Activated CD4-positive, alpha-beta memory T cell treated with anti-CD3 and anti-CD28 coated beads, Interleukin-2, amount 10 ng/mL, durations not matched to agents 7 days and 5 days (primary cell): ENCODE measurements at regions of chr7 and their contacts with region 1.

Region 1: GRCh38 chr7:142811154-142811737 is 40.5 kb downstream of the PRSS2 start:
- DNase-seq: no peak
- H3K4me3 Mint-ChIP-seq: no peak overlapping the region
- H3K27ac Mint-ChIP-seq: peak overlapping the region; percentile 79
- H3K4me1 Mint-ChIP-seq: peaks cover 71% of the 10 kb centered on the region
- H3K27me3 Mint-ChIP-seq: peaks cover 3% of the 10 kb centered on the region

Region 2: DNA sequence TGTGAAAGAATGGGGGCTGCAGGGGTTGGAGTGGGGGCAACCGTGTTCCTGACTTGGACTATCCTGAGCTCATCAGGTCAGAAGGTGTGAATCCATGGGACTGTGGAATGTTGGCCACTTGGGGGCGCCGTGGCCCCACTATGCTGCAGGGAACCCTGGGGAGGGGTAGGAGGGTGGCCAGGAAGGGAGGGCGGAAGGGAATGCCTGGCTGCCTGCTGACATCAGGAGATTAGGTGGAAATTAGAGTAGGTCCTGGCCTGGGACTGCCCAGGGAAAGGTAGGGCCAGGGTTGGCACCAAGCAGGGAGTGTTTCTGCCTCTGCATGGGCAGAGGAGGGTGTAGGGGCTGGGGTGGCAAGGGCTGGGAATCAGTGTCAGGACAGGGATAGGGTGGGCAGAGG is 487.5 kb before region 1 on chr7:
- CTCF ChIA-PET with region 1: interaction called, 37 read pairs
- POLR2A ChIA-PET with region 1: interaction called, 13 read pairs
- DNase-seq: peak; percentile 48
- H3K4me3 Mint-ChIP-seq: no peak overlapping the region
- H3K27ac Mint-ChIP-seq: no peak overlapping the region
- H3K4me1 Mint-ChIP-seq: peaks cover 19% of the 10 kb centered on the region
- H3K27me3 Mint-ChIP-seq: peaks cover 10% of the 10 kb centered on the region

Region 3: DNA sequence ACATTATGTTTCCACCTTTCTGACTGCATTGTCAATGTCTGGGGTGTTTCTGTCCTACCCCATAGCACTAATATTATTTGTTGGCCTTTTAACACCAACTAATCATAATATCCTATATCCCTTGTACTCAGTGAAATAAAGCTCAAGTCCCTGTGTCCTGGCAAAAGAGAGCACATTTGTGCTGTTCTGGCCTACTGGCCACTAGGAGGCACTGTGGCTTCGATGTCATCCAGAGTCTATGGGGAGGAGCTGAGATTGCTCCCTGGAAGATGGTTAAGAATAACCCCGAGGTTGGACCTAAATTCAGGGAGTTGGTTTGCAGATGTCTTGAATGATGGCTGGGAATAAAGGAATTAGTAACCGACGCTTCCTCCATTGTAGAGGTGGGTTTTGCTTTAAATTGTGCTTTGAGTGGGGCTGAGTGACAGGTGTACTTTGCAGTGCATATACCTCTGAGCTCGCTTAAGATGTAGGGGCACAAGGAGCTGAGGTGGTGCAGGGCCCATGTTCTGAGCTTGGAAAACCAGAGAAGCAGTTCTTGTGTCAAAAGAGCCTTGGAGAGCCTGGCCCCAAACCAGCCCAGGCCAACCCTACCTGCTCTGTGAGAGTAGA is 253.2 kb before region 1 on chr7:
- CTCF ChIA-PET with region 1: interaction called, 20 read pairs
- POLR2A ChIA-PET with region 1: interaction called, 5 read pairs
- DNase-seq: peak; percentile 58
- H3K4me3 Mint-ChIP-seq: peak overlapping the region; percentile 31
- H3K27ac Mint-ChIP-seq: no peak overlapping the region
- H3K4me1 Mint-ChIP-seq: peaks cover 35% of the 10 kb centered on the region
- H3K27me3 Mint-ChIP-seq: peaks cover 6% of the 10 kb centered on the region

Region 4: DNA sequence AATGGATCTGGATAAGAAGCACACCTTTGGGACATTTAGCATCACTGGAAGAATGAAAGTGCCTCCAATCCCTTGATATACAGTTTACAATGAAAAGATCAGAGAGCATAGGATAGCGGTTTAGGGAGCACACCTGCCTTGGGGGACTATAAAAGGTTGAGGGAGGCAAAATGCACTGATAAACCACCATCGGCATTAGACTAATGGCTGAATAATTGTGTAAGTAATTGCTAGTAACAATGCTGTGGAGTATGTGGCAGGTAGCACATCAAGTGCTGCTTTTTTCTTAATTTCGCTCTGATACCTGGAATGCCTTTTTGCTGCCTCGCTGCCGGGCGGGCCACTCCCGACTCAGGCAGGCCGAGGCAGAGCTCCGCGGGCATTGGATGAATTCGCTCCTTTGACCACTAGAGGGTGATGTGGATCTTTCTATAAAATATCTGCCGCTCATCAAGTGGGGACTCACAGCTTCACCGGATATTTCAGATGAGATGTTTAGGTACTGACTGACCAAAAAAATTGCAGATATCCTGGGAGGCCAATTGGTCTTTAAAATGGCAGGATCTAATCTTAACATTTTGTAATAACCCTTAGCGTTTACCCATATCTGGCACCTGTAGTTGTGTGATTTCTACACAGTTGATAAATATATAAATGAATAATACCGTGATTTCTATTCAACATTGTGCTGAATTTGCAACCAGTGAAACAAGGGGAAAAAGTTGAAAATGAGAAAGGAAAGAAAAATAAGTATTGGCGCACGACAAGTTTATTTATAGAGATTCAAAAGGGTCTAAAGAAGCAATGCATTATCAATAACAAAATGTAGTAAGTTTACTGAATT is 178.7 kb before region 1 on chr7:
- CTCF ChIA-PET with region 1: interaction called, 45 read pairs
- POLR2A ChIA-PET with region 1: interaction called, 33 read pairs
- DNase-seq: peak; percentile 60
- H3K4me3 Mint-ChIP-seq: no peak overlapping the region
- H3K27ac Mint-ChIP-seq: peak overlapping the region; percentile 29
- H3K4me1 Mint-ChIP-seq: peaks cover 13% of the 10 kb centered on the region
- H3K27me3 Mint-ChIP-seq: peaks cover 15% of the 10 kb centered on the region

Region 5: DNA sequence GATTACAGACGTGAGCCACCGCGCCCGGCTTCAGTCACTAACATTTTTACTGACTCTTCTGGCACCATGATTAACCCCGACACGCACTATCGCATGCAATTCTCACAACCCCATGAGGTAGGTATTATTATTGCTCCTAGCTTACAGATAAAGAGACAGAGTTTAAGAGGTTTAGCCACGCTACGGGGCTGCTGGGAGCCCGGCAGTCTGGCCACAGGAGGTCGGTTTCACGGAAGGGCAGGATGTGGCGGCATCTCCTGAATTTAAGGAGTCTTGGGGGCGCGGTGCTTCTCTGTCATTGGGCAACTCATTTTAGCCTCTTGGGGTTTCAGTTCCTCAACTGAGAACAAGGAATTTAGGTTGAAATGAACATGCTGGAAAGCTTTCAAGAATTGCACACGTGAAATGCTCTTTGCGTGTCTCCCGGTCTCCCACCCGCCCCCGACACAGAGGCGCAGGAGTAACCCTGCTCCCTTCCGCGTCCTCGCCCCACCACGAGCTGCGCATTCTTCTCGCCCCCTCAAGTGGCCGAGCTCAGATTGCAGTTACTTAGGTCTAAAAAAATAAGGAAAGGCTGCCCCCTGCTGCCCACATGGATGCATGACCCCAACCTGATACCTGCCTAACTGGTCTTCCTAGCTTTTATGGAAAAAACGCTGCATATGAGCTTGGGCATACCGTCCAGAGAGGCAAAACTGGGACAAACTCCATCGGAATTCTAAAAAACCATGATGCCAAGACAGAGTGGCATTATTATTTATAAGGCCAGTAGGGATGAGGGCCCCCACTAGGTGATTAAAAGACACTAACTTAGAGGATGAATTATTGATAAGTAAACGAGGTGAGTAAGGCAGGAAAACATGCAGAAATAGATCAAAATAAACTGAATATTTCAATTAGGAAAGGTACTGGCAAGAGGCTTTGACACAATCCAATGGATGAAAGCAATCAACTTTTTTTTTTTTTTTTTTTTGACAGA is 28.0 kb before region 1 on chr7:
- CTCF ChIA-PET with region 1: interaction called, 300 read pairs
- POLR2A ChIA-PET with region 1: interaction called, 2,273 read pairs
- DNase-seq: peak; percentile 84
- H3K4me3 Mint-ChIP-seq: peak overlapping the region; percentile 64
- H3K27ac Mint-ChIP-seq: peak overlapping the region; percentile 89
- H3K4me1 Mint-ChIP-seq: peaks cover 22% of the 10 kb centered on the region
- H3K27me3 Mint-ChIP-seq: no peaks in the 10 kb centered on the region